ENCODE measurements at regions of chr4 and their contacts with region 1.

Region 1: DNA sequence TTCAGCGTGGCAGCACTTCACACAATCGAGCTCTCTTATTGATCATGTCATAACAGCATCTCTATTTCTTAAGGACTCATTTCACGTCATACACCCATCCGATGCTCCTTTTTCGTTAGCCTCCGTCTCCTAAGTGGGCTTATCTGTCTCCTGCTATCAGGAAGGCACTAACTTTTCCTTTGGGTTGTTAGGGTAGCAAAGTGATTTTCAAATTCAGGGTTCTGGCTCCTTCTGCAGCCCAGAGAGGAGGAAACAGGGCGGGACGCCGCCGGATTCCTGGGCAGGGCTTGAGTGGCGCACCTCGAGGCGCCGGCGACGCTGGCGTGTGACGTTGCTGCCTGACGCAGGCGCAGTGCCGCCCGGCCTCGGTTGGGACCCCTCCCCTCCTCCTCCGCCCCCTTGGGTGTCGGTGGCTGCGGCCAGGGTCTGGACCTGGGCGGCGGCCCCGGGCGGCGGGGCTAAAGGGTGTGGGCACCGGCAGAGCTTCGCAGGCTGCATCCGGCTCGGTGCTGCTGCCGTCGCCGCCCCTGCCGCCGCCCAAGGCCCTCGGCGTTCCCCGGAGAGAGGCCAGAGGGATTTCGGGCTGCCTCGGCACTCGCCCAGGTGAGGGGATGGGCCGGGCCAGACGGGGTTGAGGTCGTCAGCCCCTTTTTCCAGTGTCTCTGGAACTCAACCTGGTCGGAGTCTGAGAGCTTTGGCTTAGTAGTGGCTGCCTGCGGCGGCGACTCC is at the start of gene BLTP1:
- DNase-seq: peak; percentile 91
- ATAC-seq: peak; percentile 96
- H3K4me3 ChIP-seq: peak within 1 kb of the TSS; percentile 73 to 89 (median 86)
- H3K4me3 Mint-ChIP-seq: peak within 1 kb of the TSS; percentile 92
- H3K27ac ChIP-seq: peak within 1 kb of the TSS; percentile 73 to 87
- H3K27ac Mint-ChIP-seq: peak within 1 kb of the TSS; percentile 91
- H3K4me1 ChIP-seq: peaks cover 20 to 25% of the 10 kb centered on the region in 2 donors
- H3K4me1 Mint-ChIP-seq: peaks cover 52% of the 10 kb centered on the region
- H3K27me3 ChIP-seq: no peaks in the 10 kb centered on the region
- H3K27me3 Mint-ChIP-seq: peaks cover 3% of the 10 kb centered on the region
- CTCF ChIP-seq: no peak
- total RNA-seq, gene BLTP1: 86.3 and 96.8 TPM in 2 replicates

Region 2: DNA sequence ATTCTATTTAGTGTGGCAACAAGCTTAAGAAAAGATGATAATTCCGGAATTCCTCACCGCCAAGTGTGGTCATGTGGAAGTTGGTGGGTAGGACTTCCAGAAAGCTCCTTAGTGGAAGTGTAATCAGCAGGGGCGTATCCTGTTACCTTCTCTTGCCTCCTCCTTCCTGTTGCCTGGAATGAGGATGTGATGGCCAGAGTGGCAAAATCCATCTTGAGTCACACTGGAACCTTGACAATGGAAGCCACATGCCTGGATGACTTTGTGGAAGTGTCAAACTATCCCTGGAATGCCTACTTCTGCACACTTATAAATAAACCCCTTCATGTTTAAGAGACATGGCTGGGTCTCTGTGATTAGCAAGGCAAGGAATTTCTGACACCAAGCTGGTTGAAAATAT is 1420.6 kb before region 1 on chr4:
- CTCF ChIA-PET with region 1: no interaction called
- POLR2A ChIA-PET with region 1: no interaction called
- intact Hi-C with region 1: no loop called
- DNase-seq: no peak
- ATAC-seq: no peak
- H3K4me3 ChIP-seq: no peak overlapping the region
- H3K4me3 Mint-ChIP-seq: no peak overlapping the region
- H3K27ac ChIP-seq: no peak overlapping the region
- H3K27ac Mint-ChIP-seq: no peak overlapping the region
- H3K4me1 ChIP-seq: no peaks in the 10 kb centered on the region
- H3K4me1 Mint-ChIP-seq: no peaks in the 10 kb centered on the region
- H3K27me3 ChIP-seq: peaks cover 0 to 2% (median 0%) of the 10 kb centered on the region in 4 experiments
- H3K27me3 Mint-ChIP-seq: no peaks in the 10 kb centered on the region
- CTCF ChIP-seq: no peak

Region 3: DNA sequence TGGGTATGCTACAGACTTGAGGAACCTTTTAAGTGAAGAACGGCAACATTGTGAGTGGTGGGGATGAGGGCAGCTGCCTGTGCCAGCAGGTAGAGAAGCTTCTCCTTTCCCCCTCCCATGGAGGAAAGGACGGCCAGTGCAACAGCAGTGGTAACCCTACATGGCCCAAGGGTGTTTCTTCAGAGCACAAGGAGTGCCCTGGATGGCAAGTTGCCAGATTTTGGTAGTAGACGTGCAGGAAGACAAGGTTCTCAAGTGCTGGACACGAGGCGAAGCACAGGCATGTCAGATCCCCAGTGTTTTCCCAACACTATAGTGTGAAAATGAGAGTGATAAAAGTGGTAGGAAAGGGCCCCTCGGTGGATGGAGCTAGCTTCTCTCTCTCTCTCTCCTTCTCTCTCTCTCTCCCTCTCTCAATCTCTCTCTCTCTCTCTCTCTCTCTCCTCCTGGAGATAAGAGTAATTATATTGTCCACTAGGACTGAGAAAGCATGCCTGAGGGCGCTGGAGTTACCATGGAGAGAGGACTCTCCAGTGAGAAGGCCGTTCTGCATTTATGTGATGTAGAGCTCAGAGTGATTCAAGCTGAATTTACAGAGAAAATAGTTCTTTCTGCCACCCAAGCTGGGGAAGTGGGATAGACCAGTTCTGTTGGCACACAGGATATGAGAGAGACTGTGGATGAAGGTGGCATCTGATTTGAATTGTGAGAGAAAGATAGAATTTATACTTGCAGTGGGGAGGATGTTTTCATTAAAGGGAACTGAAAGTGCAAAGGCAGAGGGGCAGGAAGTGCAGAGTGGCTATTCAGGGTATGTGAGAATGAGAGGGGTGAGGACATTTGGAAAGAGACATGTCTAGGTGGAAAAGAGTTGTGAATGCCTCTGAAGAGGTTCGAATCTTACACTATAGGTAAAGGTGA is 174.6 kb before region 1 on chr4:
- CTCF ChIA-PET with region 1: no interaction called
- POLR2A ChIA-PET with region 1: no interaction called
- intact Hi-C with region 1: loop called (anchors 10 kb)
- DNase-seq: peak; percentile 22
- ATAC-seq: peak; percentile 75
- H3K4me3 ChIP-seq: peak overlapping the region in 1 of 5 experiments; percentile 34
- H3K4me3 Mint-ChIP-seq: peak overlapping the region; percentile 49
- H3K27ac ChIP-seq: peak overlapping the region in 1 of 2 donors; percentile 17
- H3K27ac Mint-ChIP-seq: peak overlapping the region; percentile 28
- H3K4me1 ChIP-seq: peaks cover 9 to 19% of the 10 kb centered on the region in 2 donors
- H3K4me1 Mint-ChIP-seq: peaks cover 18% of the 10 kb centered on the region
- H3K27me3 ChIP-seq: peaks cover 0 to 3% (median 1%) of the 10 kb centered on the region in 4 experiments
- H3K27me3 Mint-ChIP-seq: peaks cover 5% of the 10 kb centered on the region
- CTCF ChIP-seq: no peak

Measured in B cell (primary cell).